ENCODE measurements at regions of chr7 and their contacts with region 1.

Region 1: GRCh38 chr7:142385491-142386340 is 127.9 kb upstream of the PRSS58 start:
- DNase-seq: peak; percentile 72
- ATAC-seq: peak; percentile 62
- H3K4me3 Mint-ChIP-seq: peak overlapping the region; percentile 12
- H3K27ac Mint-ChIP-seq: peak overlapping the region; percentile 8
- H3K4me1 Mint-ChIP-seq: peaks cover 32% of the 10 kb centered on the region
- H3K27me3 Mint-ChIP-seq: no peaks in the 10 kb centered on the region

Region 2: DNA sequence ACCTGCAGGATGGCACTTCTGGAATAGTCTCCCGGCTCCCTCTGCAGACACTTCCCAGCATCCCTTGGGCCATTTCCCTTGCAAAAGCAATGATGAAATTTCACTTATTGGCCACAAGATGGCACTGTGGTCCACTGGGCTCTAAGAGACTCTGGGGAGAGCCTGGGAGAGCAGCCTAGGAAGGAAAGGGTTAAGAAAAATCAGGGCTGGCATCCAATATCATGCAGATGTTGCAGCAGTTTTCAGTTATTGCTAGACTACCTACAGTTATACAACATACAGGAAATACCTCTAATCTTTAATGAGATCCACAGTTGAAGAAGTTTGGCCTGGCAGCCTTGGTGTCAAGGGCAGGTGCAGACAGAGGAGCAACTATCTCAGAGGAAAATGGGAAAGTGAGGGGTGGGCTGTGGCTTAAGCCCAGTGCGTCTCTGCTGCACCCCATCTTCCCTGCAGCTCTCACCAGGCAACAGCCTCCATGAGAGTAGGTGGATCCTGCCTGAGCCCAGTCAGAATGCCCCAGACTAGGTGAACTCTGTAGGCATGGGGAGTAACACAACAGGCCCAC is 27.7 kb before region 1 on chr7:
- CTCF ChIA-PET with region 1: interaction called, 25 read pairs
- DNase-seq: no peak
- ATAC-seq: peak; percentile 68
- H3K4me3 Mint-ChIP-seq: no peak overlapping the region
- H3K27ac Mint-ChIP-seq: no peak overlapping the region
- H3K4me1 Mint-ChIP-seq: peaks cover 27% of the 10 kb centered on the region
- H3K27me3 Mint-ChIP-seq: peaks cover 19% of the 10 kb centered on the region

Region 3: GRCh38 chr7:142412551-142413193 is 27.0 kb after region 1 on chr7:
- CTCF ChIA-PET with region 1: interaction called, 11 read pairs
- DNase-seq: peak; percentile 55
- ATAC-seq: peak; percentile 58
- H3K4me3 Mint-ChIP-seq: no peak overlapping the region
- H3K27ac Mint-ChIP-seq: no peak overlapping the region
- H3K4me1 Mint-ChIP-seq: peaks cover 11% of the 10 kb centered on the region
- H3K27me3 Mint-ChIP-seq: no peaks in the 10 kb centered on the region

Region 4: DNA sequence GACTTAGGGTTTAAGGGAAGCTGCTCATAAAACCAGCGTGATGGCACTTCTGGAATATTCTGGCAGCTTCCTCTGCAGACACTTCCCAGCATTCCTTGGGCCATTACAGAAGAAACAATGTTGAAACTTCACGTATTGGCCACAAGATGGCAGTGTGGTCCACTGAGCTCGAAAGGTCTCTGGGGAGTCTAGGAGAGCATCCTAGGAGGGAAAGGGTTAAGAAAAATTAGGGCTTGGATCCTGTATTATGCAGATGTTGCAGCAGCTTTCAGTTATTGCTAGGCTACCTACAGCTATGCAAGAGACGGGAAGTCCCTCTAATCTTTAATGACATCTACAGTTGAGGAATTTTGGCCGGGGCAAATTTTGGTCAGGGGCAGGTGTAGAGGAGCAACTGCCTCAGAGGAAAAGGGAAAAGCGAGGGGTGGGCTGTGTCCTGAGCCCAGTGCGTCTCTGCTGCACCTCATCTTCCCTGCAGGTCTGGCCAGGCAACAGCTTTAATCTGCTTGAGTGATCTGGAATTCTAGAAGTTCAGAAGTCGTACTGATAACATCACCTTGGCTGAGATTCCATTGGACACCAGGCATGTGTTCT is 92.9 kb after region 1 on chr7:
- CTCF ChIA-PET with region 1: interaction called, 15 read pairs
- DNase-seq: peak; percentile 49
- ATAC-seq: peak; percentile 58
- H3K4me3 Mint-ChIP-seq: no peak overlapping the region
- H3K27ac Mint-ChIP-seq: peak overlapping the region; percentile 24
- H3K4me1 Mint-ChIP-seq: peaks cover 33% of the 10 kb centered on the region
- H3K27me3 Mint-ChIP-seq: no peaks in the 10 kb centered on the region

Region 5: GRCh38 chr7:142796608-142797385 is 411.1 kb after region 1 on chr7:
- CTCF ChIA-PET with region 1: interaction called, 12 read pairs
- DNase-seq: no peak
- ATAC-seq: peak; percentile 6
- H3K4me3 Mint-ChIP-seq: peak overlapping the region; percentile 100
- H3K27ac Mint-ChIP-seq: peak overlapping the region; percentile 92
- H3K4me1 Mint-ChIP-seq: peaks cover 70% of the 10 kb centered on the region
- H3K27me3 Mint-ChIP-seq: no peaks in the 10 kb centered on the region

Measured in activated CD8-positive, alpha-beta memory T cell treated with anti-CD3 and anti-CD28 coated beads, Interleukin-2, amount 10 ng/mL, durations not matched to agents 7 days and 5 days (primary cell).